Panc1 (cell line): ENCODE measurements at regions of chr16 and their contacts with region 1.

Region 1: DNA sequence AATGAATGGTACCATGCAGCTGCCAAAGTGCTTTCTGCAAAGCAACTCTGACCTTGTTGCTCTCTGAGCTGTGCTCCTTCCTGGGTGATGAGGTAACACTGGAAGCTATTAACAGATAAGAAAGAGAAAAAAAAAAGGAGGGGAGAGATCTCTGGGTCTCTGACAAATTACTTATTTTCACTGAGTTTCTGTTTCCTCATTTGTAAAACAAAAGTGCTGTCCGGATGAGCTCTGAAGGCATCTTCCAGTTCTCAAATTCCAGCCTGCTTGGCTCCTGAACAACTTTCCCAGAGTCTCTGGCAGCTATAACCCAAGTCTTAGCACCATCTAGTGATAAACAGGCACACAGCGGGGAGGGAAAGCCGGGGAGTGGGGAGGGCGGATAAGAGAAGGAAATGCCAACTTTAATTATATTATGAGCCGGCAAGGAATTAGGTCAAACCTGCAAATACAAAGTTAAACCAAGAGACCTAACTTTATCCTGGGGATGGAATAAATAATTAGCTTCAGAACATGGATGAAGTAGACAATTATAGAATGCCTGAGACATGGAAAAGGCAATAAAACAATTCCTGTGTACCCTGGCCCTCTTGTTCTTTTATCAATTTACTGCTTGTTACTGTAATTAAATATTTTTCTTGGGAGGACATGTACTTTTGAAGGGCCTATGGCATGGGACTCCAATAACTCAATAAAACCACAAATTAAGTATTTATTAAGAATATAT is 61.3 kb upstream of the KIFC3 start:
- DNase-seq: peak; percentile 42
- ATAC-seq: peak; percentile 92
- H3K4me3 ChIP-seq: no peak overlapping the region
- H3K27ac ChIP-seq: no peak overlapping the region
- H3K4me1 ChIP-seq: peaks cover 10% of the 10 kb centered on the region
- H3K27me3 ChIP-seq: no peaks in the 10 kb centered on the region
- CTCF ChIP-seq: peak; percentile 75

Region 2: DNA sequence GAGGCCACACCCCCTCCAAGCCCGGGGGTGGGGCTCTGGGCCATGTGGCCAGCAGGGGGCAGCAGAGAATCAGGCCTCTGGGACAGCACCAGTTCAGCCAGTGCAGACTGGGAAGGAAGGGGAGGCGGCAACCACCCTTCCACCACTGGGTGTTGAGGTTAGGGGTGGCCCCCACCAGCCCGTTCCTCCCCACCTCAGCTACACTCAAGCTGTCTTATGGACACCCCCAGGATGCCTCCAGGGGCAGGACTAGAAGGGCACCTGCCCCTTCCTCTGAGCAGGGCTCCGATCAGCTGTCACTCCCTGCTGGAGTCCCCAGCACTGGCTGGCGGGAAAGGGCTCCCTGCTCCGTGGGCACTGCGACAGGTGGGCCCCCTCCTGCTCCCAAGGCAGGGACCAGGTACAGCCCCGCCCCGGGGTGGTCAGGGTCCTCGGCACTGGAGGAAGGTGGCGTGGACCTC is 106.2 kb before region 1 on chr16:
- CTCF ChIA-PET with region 1: interaction called, 3 read pairs
- POLR2A ChIA-PET with region 1: no interaction called
- in situ Hi-C with region 1: no loop called
- intact Hi-C with region 1: loop called (anchors 2 kb)
- DNase-seq: no peak
- ATAC-seq: peak; percentile 90
- H3K4me3 ChIP-seq: no peak overlapping the region
- H3K27ac ChIP-seq: no peak overlapping the region
- H3K4me1 ChIP-seq: no peaks in the 10 kb centered on the region
- H3K27me3 ChIP-seq: no peaks in the 10 kb centered on the region
- CTCF ChIP-seq: peak; percentile 94

Region 3: DNA sequence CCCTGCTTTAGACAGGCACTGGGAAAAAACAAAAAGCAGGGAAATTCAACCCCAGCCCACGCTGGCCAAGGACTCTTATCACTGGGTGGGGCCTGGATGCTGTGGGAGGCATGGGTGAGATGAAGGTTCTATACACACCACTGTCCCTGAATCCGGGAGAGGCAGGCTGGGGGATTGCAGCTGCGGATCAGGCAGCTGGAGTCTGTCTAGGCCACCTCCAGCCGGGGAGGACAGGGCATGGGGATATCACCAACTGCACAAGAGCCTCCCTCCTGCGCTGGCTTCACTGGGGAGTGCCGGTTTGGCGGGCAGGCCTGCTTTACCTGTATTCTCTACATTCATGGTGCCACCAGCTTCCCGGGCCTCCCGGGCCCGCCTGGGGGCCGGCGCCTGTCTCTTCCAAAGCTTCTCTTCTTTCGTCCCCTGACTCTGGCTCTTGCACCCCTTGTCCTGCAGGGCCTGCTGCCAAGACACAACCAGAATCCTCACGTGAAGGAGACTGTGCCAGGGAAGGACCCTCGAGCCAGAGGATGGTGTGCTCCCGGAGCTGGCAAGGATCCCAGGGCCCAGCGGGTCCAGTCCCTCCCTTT is 75.2 kb before region 1 on chr16:
- CTCF ChIA-PET with region 1: no interaction called
- POLR2A ChIA-PET with region 1: interaction called, 10 read pairs
- in situ Hi-C with region 1: no loop called
- intact Hi-C with region 1: no loop called
- DNase-seq: no peak
- ATAC-seq: no peak; the same call in 1 of the 2 replicates
- H3K4me3 ChIP-seq: no peak overlapping the region
- H3K27ac ChIP-seq: no peak overlapping the region
- H3K4me1 ChIP-seq: no peaks in the 10 kb centered on the region
- H3K27me3 ChIP-seq: no peaks in the 10 kb centered on the region
- CTCF ChIP-seq: no peak

Region 4: GRCh38 chr16:57795431-57795878 is 68.1 kb before region 1 on chr16:
- CTCF ChIA-PET with region 1: interaction called, 5 read pairs
- POLR2A ChIA-PET with region 1: no interaction called
- in situ Hi-C with region 1: no loop called
- intact Hi-C with region 1: loop called (anchors 2 kb)
- DNase-seq: peak; percentile 27
- ATAC-seq: peak; percentile 85
- H3K4me3 ChIP-seq: no peak overlapping the region
- H3K27ac ChIP-seq: no peak overlapping the region
- H3K4me1 ChIP-seq: peaks cover 8% of the 10 kb centered on the region
- H3K27me3 ChIP-seq: no peaks in the 10 kb centered on the region
- CTCF ChIP-seq: peak; percentile 75; the same call in 1 of the 2 replicates

Region 5: GRCh38 chr16:58114827-58115825 is 251.5 kb after region 1 on chr16:
- CTCF ChIA-PET with region 1: no interaction called
- POLR2A ChIA-PET with region 1: no interaction called
- in situ Hi-C with region 1: no loop called
- intact Hi-C with region 1: no loop called
- DNase-seq: no peak
- ATAC-seq: no peak
- H3K4me3 ChIP-seq: no peak overlapping the region
- H3K27ac ChIP-seq: no peak overlapping the region
- H3K4me1 ChIP-seq: no peaks in the 10 kb centered on the region
- H3K27me3 ChIP-seq: no peaks in the 10 kb centered on the region
- CTCF ChIP-seq: no peak

Region 6: GRCh38 chr16:58154345-58154744 is 290.7 kb after region 1 on chr16:
- CTCF ChIA-PET with region 1: interaction called, 12 read pairs
- POLR2A ChIA-PET with region 1: no interaction called
- in situ Hi-C with region 1: no loop called
- intact Hi-C with region 1: no loop called
- DNase-seq: no peak
- ATAC-seq: no peak
- H3K4me3 ChIP-seq: no peak overlapping the region
- H3K27ac ChIP-seq: no peak overlapping the region
- H3K4me1 ChIP-seq: no peaks in the 10 kb centered on the region
- H3K27me3 ChIP-seq: no peaks in the 10 kb centered on the region
- CTCF ChIP-seq: no peak